Posterior cingulate gyrus (tissue), 11 donors: ENCODE measurements at regions of chr7 and their contacts with region 1.

Region 1: DNA sequence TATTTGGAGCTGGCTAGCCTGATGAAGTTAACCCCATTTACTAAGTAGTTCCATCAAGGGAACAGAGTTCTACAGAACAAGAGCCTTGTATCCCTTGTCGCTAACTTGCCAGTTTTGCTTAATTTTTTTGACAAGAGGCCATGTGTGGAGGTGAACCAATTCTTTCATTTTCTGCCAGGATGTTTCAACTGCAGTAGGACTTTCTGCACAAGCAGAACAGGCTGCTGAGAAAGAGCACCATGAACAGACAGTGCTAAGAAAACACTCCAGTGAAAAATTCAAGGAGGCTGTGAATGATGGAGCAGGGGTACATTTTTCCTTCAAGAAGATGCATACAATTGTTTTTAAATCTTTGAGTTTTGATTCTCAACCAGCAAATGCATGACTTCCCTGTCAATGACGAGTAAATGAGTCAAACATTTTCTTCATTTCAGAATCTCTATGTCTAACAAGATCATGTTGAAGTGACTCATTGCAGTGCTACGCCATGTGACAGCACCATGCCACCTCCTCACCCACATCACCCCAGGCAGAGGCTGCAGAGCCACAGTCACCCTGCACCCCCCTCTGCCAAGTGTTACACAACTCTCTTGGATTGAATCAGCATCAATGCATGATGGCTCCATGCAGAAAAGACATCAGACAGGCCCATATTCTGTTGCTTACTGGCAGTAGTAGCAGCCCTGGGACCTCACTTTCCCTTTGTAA is 193.1 kb downstream of the COBL start:
- DNase-seq: peak; percentile 44 to 93 (median 56)

Region 2: GRCh38 chr7:50962962-50963374 is 160.5 kb before region 1 on chr7:
- intact Hi-C with region 1: no loop called
- DNase-seq: no peak

Region 3: GRCh38 chr7:51085034-51085692 is 38.3 kb before region 1 on chr7:
- intact Hi-C with region 1: loop called (anchors 5 kb)
- DNase-seq: no peak

Region 4: GRCh38 chr7:51606601-51607154 is 483.2 kb after region 1 on chr7:
- intact Hi-C with region 1: no loop called
- DNase-seq: no peak